Activated naive CD4-positive, alpha-beta T cell treated with anti-CD3 and anti-CD28 coated beads for 36 hours (primary cell): ENCODE measurements at regions of chr9 and their contacts with region 1.

Region 1: DNA sequence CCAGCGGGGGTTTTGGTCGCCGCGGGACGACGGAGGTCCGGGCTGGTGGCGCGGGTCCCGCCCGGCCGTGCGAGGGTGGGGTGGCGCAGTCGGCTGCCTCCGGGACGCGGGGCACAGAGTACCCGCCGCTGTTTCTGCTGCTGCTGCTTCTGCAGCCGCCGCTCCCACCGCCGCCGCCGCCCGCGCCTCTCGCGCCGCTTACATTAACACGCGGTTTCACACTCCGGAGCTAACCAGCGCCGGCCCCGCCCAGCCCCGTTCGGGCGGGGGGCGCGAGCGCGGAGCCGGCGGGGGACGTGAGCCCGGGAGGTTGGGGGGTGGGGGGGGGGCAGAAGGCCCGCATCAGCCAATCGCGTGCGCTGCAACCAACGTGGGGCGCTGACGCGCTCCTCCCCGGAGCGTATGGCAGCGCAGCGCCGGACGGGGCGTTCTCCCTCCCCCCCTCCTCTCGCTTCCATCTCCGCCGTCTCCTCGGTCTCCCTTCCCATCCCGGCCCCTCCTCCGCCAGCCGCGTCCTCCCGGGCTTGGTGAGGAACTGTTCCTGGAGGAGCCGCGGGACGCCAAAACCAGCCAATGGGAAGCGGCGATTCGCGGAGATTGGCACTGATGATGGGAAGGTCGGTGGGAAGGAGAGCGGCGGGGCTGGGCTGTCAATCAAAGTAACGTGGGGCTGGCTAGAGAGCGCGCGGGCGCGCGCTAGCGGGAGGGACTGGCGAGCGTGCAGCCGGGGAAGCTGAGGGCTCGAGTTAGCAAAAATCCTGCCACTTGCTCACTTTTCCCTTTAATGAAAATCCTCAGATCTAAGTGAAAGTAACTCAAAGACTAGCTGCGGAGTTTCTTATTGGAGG is at the start of gene TLE1:
- DNase-seq: peak; percentile 76
- H3K4me3 Mint-ChIP-seq: peak within 1 kb of the TSS; percentile 81
- H3K27ac Mint-ChIP-seq: no peak within 1 kb of the TSS
- H3K4me1 Mint-ChIP-seq: peaks cover 18% of the 10 kb centered on the region
- H3K27me3 Mint-ChIP-seq: peaks cover 23% of the 10 kb centered on the region
- total RNA-seq, gene TLE1: 0.10 TPM

Region 2: DNA sequence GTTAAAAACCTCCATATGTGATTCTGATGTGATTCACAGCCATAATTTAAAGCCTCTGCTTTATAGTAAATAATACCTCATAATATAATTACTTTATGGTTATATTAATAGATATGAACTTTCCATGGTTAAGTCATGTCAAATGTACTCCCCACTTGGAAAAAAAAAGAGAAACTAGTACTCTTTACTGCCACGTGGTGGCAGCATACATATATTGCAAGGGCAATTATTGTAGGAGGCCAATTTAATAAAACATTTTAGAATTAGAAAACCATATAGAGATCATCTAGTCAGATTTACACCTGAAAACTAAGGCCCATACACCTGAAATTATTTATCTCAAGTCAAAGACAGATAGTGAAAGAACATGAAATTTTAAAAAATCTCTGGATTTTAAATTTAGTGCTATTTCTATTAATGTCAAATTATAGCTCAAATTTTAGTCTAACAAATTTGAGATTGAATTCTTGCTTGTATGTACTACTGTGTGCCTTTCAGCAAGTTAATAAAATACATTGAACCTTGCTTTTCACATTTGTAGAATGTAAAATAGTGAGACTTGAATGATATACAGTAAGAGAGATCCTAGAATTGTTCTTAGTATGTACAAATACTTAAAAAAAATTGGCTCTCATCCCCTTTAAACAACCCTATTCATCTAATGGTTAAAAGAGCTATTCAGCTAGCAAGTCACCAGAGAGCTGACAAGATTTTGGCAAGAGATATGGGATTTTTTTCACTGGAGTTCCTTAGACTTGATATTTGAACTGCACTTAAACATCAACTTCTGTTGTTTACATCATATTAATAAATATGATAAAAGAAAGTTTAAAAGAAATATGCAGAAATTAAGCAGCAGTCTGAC is 1514.0 kb before region 1 on chr9:
- CTCF ChIA-PET with region 1: no interaction called
- intact Hi-C with region 1: loop called (anchors 5 kb)
- DNase-seq: peak; percentile 28
- H3K4me3 Mint-ChIP-seq: no peak overlapping the region
- H3K27ac Mint-ChIP-seq: no peak overlapping the region
- H3K4me1 Mint-ChIP-seq: no peaks in the 10 kb centered on the region
- H3K27me3 Mint-ChIP-seq: peaks cover 4% of the 10 kb centered on the region

Region 3: DNA sequence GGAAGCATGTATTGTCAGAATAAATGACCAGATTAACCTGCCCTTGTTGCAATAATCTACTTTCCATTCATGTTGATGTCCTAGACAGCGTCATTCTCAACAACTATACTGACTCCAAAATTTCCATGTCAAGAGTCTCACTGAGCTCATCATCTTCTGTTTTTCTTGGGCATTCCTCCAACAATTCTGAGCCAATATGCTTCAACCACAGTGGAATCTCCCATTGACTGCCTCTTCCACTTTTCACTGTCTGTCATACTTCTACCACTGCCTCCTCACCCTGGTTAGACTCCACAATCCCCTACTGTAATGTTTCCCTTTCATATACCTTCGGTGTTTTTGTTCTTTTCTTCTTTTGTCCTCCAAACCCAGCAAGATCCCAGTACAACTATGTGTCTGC is 163.0 kb before region 1 on chr9:
- CTCF ChIA-PET with region 1: interaction called, 3 read pairs
- intact Hi-C with region 1: loop called (anchors 1 kb)
- DNase-seq: no peak
- H3K4me3 Mint-ChIP-seq: no peak overlapping the region
- H3K27ac Mint-ChIP-seq: no peak overlapping the region
- H3K4me1 Mint-ChIP-seq: no peaks in the 10 kb centered on the region
- H3K27me3 Mint-ChIP-seq: peaks cover 2% of the 10 kb centered on the region

Region 4: DNA sequence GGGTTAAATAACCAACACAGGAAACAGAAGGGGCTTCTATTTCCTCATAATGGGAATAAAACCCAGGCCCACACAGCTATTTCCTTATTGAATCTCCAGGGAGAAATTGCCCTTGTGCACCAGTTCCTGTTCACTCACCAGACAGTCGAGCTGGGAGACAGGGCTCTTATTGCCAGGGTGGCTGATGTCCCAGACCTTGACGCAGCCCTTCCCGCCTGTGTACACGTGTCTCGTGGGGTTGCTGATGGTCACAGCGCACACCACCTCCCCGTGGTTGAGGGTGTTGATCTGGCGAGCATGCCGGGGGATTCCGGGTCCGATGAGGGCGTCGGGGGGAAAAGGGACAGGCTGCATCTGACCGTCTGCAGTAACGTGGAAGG is 96.7 kb before region 1 on chr9:
- CTCF ChIA-PET with region 1: no interaction called
- intact Hi-C with region 1: loop called (anchors 10 kb)
- DNase-seq: no peak
- H3K4me3 Mint-ChIP-seq: no peak overlapping the region
- H3K27ac Mint-ChIP-seq: no peak overlapping the region
- H3K4me1 Mint-ChIP-seq: peaks cover 7% of the 10 kb centered on the region
- H3K27me3 Mint-ChIP-seq: peaks cover 24% of the 10 kb centered on the region

Region 5: DNA sequence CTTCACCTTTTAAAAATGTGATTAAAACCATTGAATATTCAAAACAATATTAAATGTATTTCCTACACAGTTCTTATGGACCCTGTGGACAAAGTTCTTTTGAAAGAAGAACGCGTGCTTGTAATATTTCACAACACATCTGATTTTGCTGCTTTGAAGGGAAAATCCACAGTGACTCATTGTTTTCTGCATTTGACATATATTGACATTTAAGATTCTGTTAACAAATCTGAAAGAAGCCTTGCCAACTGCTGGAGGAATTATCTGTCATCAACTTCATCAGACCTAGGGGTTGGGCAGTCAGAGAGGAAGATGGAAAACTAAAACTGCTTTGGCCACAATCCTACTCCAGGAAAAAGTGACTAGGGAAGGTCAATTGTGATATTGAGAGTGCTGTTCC is 1430.3 kb after region 1 on chr9:
- CTCF ChIA-PET with region 1: no interaction called
- intact Hi-C with region 1: no loop called
- DNase-seq: no peak
- H3K4me3 Mint-ChIP-seq: no peak overlapping the region
- H3K27ac Mint-ChIP-seq: no peak overlapping the region
- H3K4me1 Mint-ChIP-seq: no peaks in the 10 kb centered on the region
- H3K27me3 Mint-ChIP-seq: no peaks in the 10 kb centered on the region